ENCODE measurements at regions of chr12 and their contacts with region 1.

Region 1: GRCh38 chr12:117836999-117837736 is 131.6 kb downstream of the KSR2 start:
- DNase-seq: peak; percentile 79
- ATAC-seq: peak; percentile 61
- H3K4me3 Mint-ChIP-seq: no peak overlapping the region
- H3K27ac Mint-ChIP-seq: no peak overlapping the region
- H3K4me1 Mint-ChIP-seq: peaks cover 3% of the 10 kb centered on the region
- H3K27me3 Mint-ChIP-seq: peaks cover 7% of the 10 kb centered on the region

Region 2: DNA sequence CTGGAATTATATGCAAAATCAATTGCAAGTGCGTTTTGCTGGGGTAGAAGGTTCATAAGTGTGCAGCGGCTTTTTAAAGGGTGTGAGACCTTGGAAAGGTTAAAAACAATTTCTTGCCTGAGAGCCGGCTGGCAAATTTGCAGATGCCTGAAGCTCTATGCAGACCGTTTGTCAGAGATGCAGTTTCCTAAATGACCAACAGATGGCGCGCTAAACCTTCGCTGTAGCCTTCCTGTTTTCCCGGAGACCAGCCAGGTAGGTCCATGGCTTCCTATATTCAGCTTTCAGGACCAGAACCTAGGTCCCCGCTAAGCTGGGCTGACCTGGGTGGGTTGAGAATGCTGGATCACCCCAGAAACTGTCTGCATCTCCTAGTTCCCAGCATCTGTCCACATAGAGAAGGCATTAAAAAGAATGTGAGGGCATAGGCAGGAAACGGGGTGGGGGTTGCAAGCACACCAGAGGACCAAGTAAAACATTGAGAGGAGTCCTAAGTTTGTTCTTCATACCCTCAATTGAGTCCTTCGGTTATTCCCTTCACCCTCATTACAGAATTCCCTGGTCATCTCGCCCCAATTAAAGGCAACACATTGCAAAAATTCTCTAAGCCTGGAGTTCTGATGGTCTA is 470.0 kb before region 1 on chr12:
- CTCF ChIA-PET with region 1: interaction called, 32 read pairs
- DNase-seq: peak; percentile 66
- ATAC-seq: no peak
- H3K4me3 Mint-ChIP-seq: no peak overlapping the region
- H3K27ac Mint-ChIP-seq: no peak overlapping the region
- H3K4me1 Mint-ChIP-seq: no peaks in the 10 kb centered on the region
- H3K27me3 Mint-ChIP-seq: peaks cover 21% of the 10 kb centered on the region

Region 3: GRCh38 chr12:117774941-117775775 is 62.0 kb before region 1 on chr12:
- CTCF ChIA-PET with region 1: no interaction called
- DNase-seq: no peak
- ATAC-seq: no peak
- H3K4me3 Mint-ChIP-seq: no peak overlapping the region
- H3K27ac Mint-ChIP-seq: no peak overlapping the region
- H3K4me1 Mint-ChIP-seq: peaks cover 8% of the 10 kb centered on the region
- H3K27me3 Mint-ChIP-seq: no peaks in the 10 kb centered on the region

Region 4: GRCh38 chr12:117850048-117850447 is 12.9 kb after region 1 on chr12:
- CTCF ChIA-PET with region 1: interaction called, 18 read pairs
- DNase-seq: no peak
- ATAC-seq: no peak
- H3K4me3 Mint-ChIP-seq: no peak overlapping the region
- H3K27ac Mint-ChIP-seq: no peak overlapping the region
- H3K4me1 Mint-ChIP-seq: no peaks in the 10 kb centered on the region
- H3K27me3 Mint-ChIP-seq: no peaks in the 10 kb centered on the region

Region 5: GRCh38 chr12:117857632-117858612 is 20.8 kb after region 1 on chr12:
- CTCF ChIA-PET with region 1: interaction called, 12 read pairs
- DNase-seq: peak; percentile 67
- ATAC-seq: no peak
- H3K4me3 Mint-ChIP-seq: no peak overlapping the region
- H3K27ac Mint-ChIP-seq: no peak overlapping the region
- H3K4me1 Mint-ChIP-seq: no peaks in the 10 kb centered on the region
- H3K27me3 Mint-ChIP-seq: no peaks in the 10 kb centered on the region

Region 6: DNA sequence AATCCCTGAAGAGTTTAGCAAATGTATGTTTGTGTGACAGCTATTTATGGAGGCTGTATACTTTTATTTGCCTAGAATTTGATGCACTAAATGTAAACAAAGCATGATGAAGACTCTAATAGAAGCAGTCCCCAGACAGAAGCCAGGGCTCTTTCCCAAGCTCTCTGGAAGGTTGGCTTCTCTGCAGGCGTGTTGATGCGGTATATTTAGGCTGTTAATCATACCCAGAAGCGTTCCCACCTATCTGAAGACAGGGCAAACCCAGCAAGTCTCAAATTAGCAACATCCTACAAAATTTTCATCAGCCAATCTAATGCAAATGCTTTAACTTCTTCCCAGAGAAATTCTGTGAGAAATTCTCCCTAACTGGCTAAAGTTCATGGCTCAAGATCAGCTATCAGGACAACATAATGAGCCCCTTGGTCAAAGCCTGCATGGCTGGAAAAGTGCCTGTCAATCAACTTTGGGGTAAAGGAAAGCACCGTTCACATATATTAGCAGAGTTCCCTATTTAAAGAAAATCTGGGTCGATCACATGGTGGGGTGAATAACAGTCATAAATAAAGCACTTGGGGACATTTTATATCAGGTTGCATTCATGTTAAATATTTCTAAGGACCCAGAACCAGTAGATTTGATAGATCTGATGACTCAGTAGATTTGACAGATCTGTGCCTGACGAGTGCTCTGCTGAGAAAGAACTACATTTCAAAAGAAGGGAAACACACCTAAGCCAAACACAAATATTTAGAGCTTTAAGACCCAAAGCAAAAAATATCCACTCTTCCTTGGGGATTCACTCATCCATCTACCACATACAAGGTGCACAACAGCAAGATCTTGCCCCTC is 85.0 kb after region 1 on chr12:
- CTCF ChIA-PET with region 1: no interaction called
- DNase-seq: no peak
- ATAC-seq: no peak
- H3K4me3 Mint-ChIP-seq: no peak overlapping the region
- H3K27ac Mint-ChIP-seq: no peak overlapping the region
- H3K4me1 Mint-ChIP-seq: no peaks in the 10 kb centered on the region
- H3K27me3 Mint-ChIP-seq: peaks cover 3% of the 10 kb centered on the region

Measured in activated CD8-positive, alpha-beta memory T cell treated with anti-CD3 and anti-CD28 coated beads, Interleukin-2, amount 10 ng/mL, durations not matched to agents 7 days and 5 days (primary cell).